Heart right ventricle (tissue), 16 donors: ENCODE measurements at regions of chr6 and their contacts with region 1.

Region 1: GRCh38 chr6:3251462-3252314 is 7.1 kb upstream of the PSMG4 start:
- DNase-seq: peak; percentile 85
- ATAC-seq: peak; percentile 73 to 90 (median 83)
- H3K4me3 ChIP-seq: peak overlapping the region in 2 of 10 donors; percentile 16 to 27
- H3K27ac ChIP-seq: no peak overlapping the region
- H3K4me1 ChIP-seq: peaks cover 0 to 40% (median 15%) of the 10 kb centered on the region in 9 donors
- H3K27me3 ChIP-seq: peaks cover 0 to 39% (median 13%) of the 10 kb centered on the region in 7 donors
- CTCF ChIP-seq: peak; percentile 88 to 98 (median 97)

Region 2: GRCh38 chr6:3125815-3126214 is 125.9 kb before region 1 on chr6:
- intact Hi-C with region 1: loop called (anchors 1 to 5 kb)
- DNase-seq: no peak
- ATAC-seq: no peak
- H3K4me3 ChIP-seq: no peak overlapping the region
- H3K27ac ChIP-seq: peak overlapping the region in 1 of 10 donors; percentile 51
- H3K4me1 ChIP-seq: peaks cover 0 to 12% (median 0%) of the 10 kb centered on the region in 9 donors
- H3K27me3 ChIP-seq: no peaks in the 10 kb centered on the region
- CTCF ChIP-seq: no peak